Esophagus squamous epithelium (tissue), 5 donors: ENCODE measurements at regions of chr12 and their contacts with region 1.

Region 1: GRCh38 chr12:98424726-98425401 is 90.5 kb upstream of the TMPO start:
- DNase-seq: no peak
- H3K4me3 ChIP-seq: no peak overlapping the region
- H3K27ac ChIP-seq: no peak overlapping the region
- H3K4me1 ChIP-seq: peaks cover 0 to 8% (median 0%) of the 10 kb centered on the region in 3 donors
- H3K27me3 ChIP-seq: no peaks in the 10 kb centered on the region
- CTCF ChIP-seq: peak; percentile 19 to 72 (median 62)
- POLR2A ChIP-seq: no peak

Region 2: DNA sequence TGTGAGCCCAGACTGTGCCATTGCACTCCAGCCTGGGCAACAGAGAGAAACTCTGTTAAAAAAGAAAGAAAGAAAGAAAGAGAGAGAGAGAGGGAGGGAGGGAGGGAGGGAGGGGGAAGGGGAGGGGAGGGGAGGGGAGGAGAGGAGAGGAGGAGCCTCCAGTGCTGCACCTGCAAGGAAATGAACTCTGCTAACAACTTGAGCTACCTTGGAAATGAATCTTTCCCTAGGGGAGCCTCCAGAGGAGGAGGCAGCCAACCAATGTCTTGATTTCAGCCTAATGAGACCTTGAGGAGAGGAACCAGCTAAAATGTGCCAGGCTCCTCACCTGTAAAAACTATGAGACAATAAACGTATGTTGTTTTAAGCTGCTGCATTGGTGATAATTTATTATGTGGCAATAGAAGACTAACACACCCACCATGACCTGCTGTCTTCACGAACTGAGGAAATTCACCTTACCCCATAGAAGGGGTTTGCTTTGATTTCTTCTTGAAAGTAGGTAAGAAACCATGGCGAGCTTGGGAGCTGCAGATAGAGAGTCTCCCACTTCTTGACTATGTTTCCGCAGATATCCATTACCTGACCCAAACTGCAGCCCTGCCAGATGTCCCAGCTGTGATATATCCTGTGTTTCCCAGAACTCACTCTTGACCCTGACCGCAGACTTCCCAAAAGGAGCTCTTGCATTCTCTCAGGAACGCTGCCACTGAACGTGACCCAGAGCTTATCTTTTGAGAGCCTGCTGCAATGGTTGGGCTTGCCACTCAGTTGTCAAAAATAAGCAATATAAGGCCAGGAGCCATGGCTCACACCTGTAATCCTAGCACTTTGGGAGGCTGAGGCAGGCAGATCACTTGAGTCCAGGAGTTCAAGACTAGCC is 59.0 kb after region 1 on chr12:
- intact Hi-C with region 1: loop called (anchors 10 kb)
- DNase-seq: no peak
- H3K4me3 ChIP-seq: no peak overlapping the region
- H3K27ac ChIP-seq: no peak overlapping the region
- H3K4me1 ChIP-seq: no peaks in the 10 kb centered on the region
- H3K27me3 ChIP-seq: no peaks in the 10 kb centered on the region
- CTCF ChIP-seq: no peak
- POLR2A ChIP-seq: no peak